Thyroid gland (tissue), 4 donors: ENCODE measurements at regions of chr1 and their contacts with region 1.

Region 1: DNA sequence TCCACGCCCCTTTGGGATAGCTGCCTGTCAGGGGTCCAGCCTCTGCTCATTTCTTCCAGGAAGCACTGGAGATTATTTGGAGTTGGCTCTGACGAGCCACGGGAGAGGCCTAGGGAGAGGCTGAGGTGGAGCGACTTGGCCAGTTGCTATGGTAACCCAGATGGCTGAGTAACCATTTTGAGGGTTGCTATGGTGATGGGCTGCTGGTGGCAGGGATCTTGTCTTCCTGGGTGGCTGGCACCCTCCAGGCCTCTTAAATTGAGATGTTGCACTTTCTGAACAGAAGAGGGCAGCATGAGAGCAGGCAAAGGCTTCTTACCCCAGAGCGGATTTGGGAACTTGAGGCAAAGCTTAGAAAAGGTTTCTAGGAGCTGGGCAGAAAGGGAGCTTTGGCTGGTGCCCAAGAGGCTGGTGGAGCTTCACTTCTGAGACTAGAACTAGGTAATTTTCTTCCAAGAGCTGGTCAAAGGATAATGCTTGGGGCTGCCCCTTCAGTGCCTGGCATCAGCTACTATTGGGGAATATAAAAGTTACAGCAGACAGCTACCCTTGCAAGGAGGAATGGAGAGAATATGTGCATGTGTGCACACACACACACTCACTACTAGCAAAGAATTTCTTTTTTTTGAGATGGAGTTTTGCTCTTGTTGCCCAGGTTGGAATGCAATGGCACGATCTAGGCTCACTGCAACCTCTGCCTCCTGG is 72.5 kb downstream of the NDUFS5 start:
- DNase-seq: peak; percentile 59 to 64
- H3K4me3 ChIP-seq: no peak overlapping the region
- H3K27ac ChIP-seq: no peak overlapping the region
- H3K4me1 ChIP-seq: peaks cover 11% of the 10 kb centered on the region in 2 donors
- H3K27me3 ChIP-seq: no peaks in the 10 kb centered on the region
- CTCF ChIP-seq: peak; percentile 36 to 77 (median 75)
- POLR2A ChIP-seq: no peak

Region 2: GRCh38 chr1:38964140-38964548 is 134.6 kb before region 1 on chr1:
- intact Hi-C with region 1: no loop called
- DNase-seq: no peak
- H3K4me3 ChIP-seq: no peak overlapping the region
- H3K27ac ChIP-seq: no peak overlapping the region
- H3K4me1 ChIP-seq: no peaks in the 10 kb centered on the region
- H3K27me3 ChIP-seq: no peaks in the 10 kb centered on the region
- CTCF ChIP-seq: no peak
- POLR2A ChIP-seq: no peak

Region 3: GRCh38 chr1:39196244-39197215 is 97.8 kb after region 1 on chr1:
- intact Hi-C with region 1: loop called (anchors 5 kb)
- DNase-seq: no peak
- H3K4me3 ChIP-seq: no peak overlapping the region
- H3K27ac ChIP-seq: peak overlapping the region in 1 of 3 donors; percentile 34
- H3K4me1 ChIP-seq: peaks cover 10 to 62% of the 10 kb centered on the region in 2 donors
- H3K27me3 ChIP-seq: no peaks in the 10 kb centered on the region
- CTCF ChIP-seq: no peak
- POLR2A ChIP-seq: no peak

Region 4: GRCh38 chr1:39258146-39258924 is 159.6 kb after region 1 on chr1:
- intact Hi-C with region 1: loop called (anchors 10 kb)
- DNase-seq: peak; percentile 71 to 72
- H3K4me3 ChIP-seq: no peak overlapping the region
- H3K27ac ChIP-seq: peak overlapping the region in 1 of 3 donors; percentile 28
- H3K4me1 ChIP-seq: peaks cover 3% of the 10 kb centered on the region in 2 donors
- H3K27me3 ChIP-seq: no peaks in the 10 kb centered on the region
- CTCF ChIP-seq: peak; percentile 68 to 93 (median 84)
- POLR2A ChIP-seq: no peak

Region 5: GRCh38 chr1:39269791-39270342 is 171.2 kb after region 1 on chr1:
- intact Hi-C with region 1: loop called (anchors 10 kb)
- DNase-seq: no peak
- H3K4me3 ChIP-seq: no peak overlapping the region
- H3K27ac ChIP-seq: no peak overlapping the region
- H3K4me1 ChIP-seq: peaks cover 14 to 33% of the 10 kb centered on the region in 2 donors
- H3K27me3 ChIP-seq: no peaks in the 10 kb centered on the region
- CTCF ChIP-seq: no peak
- POLR2A ChIP-seq: no peak

Region 6: DNA sequence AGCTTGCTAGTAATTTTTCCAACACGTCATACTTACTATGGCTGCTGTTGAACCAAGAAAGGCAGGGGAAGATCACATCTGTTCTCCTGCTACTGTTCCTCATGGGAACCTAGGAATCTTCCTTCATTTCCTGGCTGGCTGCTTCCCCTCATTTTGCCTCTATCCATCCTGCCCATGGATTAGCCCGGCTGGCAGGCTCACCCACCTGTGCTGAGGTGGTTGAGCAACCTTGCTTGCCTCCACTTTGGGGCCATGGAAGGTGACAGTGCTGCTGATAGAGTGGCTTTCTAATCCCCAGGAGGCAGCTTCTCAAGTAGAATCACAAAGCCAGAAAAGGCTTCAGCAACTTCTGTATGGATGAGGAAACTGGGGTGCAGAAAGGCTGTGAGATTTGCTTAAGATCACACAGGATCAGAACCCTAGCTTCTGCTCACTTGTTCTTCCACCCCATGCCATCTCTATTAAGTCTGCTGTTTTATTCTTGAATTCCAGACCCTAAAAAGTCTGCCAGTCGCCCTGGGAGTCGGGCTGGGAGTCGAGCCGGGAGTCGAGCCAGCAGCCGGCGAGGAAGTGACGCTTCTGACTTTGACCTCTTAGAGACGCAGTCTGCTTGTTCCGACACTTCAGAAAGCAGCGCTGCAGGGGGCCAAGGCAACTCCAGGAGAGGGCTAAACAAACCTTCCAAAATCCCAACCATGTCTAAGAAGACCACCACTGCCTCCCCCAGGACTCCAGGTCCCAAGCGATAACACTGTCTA is 386.5 kb after region 1 on chr1:
- intact Hi-C with region 1: no loop called
- DNase-seq: peak; percentile 91 to 92
- H3K4me3 ChIP-seq: no peak overlapping the region
- H3K27ac ChIP-seq: peak overlapping the region; percentile 80 to 84 (median 80)
- H3K4me1 ChIP-seq: peaks cover 27 to 54% of the 10 kb centered on the region in 2 donors
- H3K27me3 ChIP-seq: no peaks in the 10 kb centered on the region
- CTCF ChIP-seq: peak in 1 of 6 experiments; percentile 11
- POLR2A ChIP-seq: peak in 1 of 2 donors; percentile 43